ENCODE measurements at regions of chr9 and their contacts with region 1.

Region 1: GRCh38 chr9:129383561-129384416 is 205.7 kb upstream of the IER5L start:
- DNase-seq: peak; percentile 94
- ATAC-seq: peak; percentile 88
- H3K4me3 ChIP-seq: peak overlapping the region; percentile 12 to 82 (median 68)
- H3K4me3 Mint-ChIP-seq: peak overlapping the region; percentile 86
- H3K27ac ChIP-seq: peak overlapping the region; percentile 90 to 96
- H3K27ac Mint-ChIP-seq: peak overlapping the region; percentile 97
- H3K4me1 ChIP-seq: peaks cover 17 to 26% of the 10 kb centered on the region in 2 donors
- H3K4me1 Mint-ChIP-seq: peaks cover 21% of the 10 kb centered on the region
- H3K27me3 ChIP-seq: peaks cover 0 to 7% (median 0%) of the 10 kb centered on the region in 4 experiments
- H3K27me3 Mint-ChIP-seq: peaks cover 3% of the 10 kb centered on the region
- CTCF ChIP-seq: no peak

Region 2: DNA sequence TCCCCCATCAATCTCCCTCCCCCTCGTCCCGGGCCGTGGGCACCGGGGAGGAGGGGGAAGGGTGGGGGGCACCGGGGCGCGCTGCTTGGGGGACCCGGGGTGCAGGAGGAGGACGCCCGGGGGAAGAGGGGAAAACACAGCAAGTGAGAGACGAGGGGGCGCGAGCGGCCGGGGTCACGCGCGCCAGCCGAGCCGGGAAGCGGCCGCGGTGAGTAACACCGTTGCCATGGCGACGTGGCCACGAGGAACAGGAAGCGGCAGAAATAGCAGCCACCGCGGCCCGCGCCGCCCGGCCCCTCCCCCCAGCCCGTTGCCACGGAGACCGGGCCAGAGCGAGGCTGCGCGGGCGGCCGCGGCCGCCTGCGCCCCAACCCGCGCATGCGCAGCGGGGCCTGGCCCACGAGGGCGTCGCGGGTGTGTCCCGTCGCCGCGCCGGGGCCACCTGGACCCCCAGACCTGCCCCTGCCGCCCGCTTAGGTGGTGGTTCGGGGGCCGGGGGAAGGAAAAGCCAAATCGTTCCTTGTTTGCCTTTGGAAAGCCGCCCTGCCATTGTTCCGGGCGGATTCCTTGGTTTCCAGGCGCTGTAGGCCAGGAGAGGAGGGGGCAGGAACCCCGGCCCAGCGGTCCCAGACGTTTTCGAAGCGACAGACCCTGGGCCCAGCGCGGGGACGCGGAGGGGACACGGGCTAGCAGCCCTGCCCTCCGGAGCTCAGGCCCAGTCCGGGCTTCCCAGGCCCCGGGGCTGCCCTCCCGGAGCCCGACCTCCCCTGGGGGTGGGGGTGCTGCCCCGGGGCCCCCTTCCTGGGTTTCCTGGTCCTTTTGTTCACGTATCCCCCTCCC is 30.0 kb after region 1 on chr9:
- CTCF ChIA-PET with region 1: interaction called, 6 read pairs
- POLR2A ChIA-PET with region 1: interaction called, 17 read pairs
- intact Hi-C with region 1: loop called (anchors 1 kb)
- DNase-seq: peak; percentile 99
- ATAC-seq: peak; percentile 71
- H3K4me3 ChIP-seq: peak overlapping the region in 4 of 5 experiments; percentile 75 to 79 (median 77)
- H3K4me3 Mint-ChIP-seq: peak overlapping the region; percentile 91
- H3K27ac ChIP-seq: peak overlapping the region; percentile 99
- H3K27ac Mint-ChIP-seq: peak overlapping the region; percentile 100
- H3K4me1 ChIP-seq: peaks cover 18 to 25% of the 10 kb centered on the region in 2 donors
- H3K4me1 Mint-ChIP-seq: peaks cover 25% of the 10 kb centered on the region
- H3K27me3 ChIP-seq: no peaks in the 10 kb centered on the region
- H3K27me3 Mint-ChIP-seq: no peaks in the 10 kb centered on the region
- CTCF ChIP-seq: no peak

Region 3: DNA sequence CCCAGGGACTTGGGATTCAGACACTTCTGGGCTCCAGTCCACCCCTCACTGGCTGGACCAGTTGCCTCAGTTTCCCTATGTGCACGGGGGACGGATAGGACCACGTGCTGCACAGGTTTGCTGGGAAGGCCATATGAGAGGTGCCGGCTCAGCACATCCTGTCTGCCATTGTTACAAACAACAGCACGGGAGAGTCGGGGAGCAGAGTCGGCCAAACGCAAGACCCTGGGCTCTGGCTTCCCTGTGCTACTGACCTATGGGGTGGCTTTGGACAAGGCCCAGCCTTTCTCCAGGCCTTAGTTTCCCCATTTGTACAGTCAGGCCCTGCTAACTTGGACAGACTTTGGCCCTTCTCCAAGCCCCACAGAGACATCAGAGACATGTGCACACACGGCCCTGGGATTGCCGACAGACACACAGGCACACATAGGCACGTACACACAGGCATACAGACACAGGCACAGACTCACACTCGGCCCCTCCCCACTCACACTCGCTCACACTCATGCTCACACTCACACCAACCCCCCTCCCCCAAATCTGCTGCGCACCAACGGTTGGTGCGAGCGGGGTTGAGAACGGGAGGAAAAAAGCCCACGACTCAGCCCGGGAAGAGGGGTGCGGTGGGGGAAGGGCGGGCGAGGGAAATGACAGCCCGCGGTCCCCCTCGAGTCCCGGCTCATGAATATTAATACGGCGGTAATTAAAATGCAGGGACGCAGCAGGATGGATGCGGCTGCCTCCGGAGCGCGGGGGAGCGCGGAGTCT is 104.0 kb after region 1 on chr9:
- CTCF ChIA-PET with region 1: interaction called, 6 read pairs
- POLR2A ChIA-PET with region 1: interaction called, 3 read pairs
- intact Hi-C with region 1: loop called (anchors 1 kb)
- DNase-seq: peak; percentile 69
- ATAC-seq: peak; percentile 13
- H3K4me3 ChIP-seq: peak overlapping the region; percentile 38 to 62 (median 49)
- H3K4me3 Mint-ChIP-seq: peak overlapping the region; percentile 89
- H3K27ac ChIP-seq: peak overlapping the region in 1 of 2 donors; percentile 63
- H3K27ac Mint-ChIP-seq: peak overlapping the region; percentile 90
- H3K4me1 ChIP-seq: peaks cover 24 to 28% of the 10 kb centered on the region in 2 donors
- H3K4me1 Mint-ChIP-seq: peaks cover 35% of the 10 kb centered on the region
- H3K27me3 ChIP-seq: peaks cover 0 to 38% (median 9%) of the 10 kb centered on the region in 4 experiments
- H3K27me3 Mint-ChIP-seq: peaks cover 15% of the 10 kb centered on the region
- CTCF ChIP-seq: no peak

Region 4: DNA sequence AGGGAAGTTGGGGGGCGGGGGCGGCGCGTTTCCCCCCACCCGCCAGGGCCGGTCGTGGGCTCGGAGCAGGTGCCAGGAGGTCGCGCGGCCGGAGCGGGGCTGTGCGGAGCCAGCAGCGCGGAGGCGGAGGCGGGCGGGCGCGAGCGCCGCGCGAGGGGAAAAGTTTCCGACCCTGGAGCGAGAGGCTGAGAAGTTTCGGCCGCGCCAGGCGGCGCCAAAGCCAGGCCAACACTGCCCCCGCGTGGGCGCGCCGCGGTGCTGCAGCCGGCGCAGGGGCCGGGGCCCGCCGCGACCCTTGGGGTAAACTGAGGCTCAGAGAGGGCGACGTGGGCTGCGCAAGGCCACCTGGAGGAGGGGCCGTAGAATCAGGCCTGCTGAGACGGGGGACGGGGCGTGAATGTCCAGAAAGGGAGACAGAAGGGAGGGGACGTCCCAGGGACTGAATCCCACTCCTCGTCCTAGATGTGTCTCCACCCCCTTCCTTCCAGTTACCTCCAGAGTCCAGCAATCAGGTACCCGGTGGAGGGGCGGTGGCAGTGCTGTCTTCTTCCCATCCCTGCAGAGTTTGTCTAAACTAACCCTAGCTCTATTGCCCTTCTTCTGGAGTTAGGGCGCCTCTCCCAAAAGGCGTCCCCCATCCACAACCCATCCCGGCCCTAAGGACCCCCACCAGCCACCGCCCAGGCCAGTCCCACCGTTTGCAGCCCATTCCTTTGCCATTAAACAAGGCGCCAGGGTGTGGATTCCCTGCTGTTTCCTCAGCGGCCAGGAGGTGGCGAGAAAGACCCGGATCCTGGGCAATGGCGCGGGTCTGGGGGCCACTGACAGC is 226.9 kb after region 1 on chr9:
- CTCF ChIA-PET with region 1: interaction called, 5 read pairs
- POLR2A ChIA-PET with region 1: no interaction called
- intact Hi-C with region 1: loop called (anchors 2 kb)
- DNase-seq: peak; percentile 81
- ATAC-seq: peak; percentile 77
- H3K4me3 ChIP-seq: peak overlapping the region; percentile 21 to 86 (median 59)
- H3K4me3 Mint-ChIP-seq: peak overlapping the region; percentile 79
- H3K27ac ChIP-seq: peak overlapping the region in 1 of 2 donors; percentile 39
- H3K27ac Mint-ChIP-seq: peak overlapping the region; percentile 61
- H3K4me1 ChIP-seq: peaks cover 19 to 21% of the 10 kb centered on the region in 2 donors
- H3K4me1 Mint-ChIP-seq: peaks cover 22% of the 10 kb centered on the region
- H3K27me3 ChIP-seq: peaks cover 0 to 13% (median 0%) of the 10 kb centered on the region in 4 experiments
- H3K27me3 Mint-ChIP-seq: no peaks in the 10 kb centered on the region
- CTCF ChIP-seq: peak; percentile 94

Measured in B cell (primary cell).